ENCODE measurements at regions of chr7 and their contacts with region 1.

Region 1: GRCh38 chr7:140003913-140004382 is 58.8 kb downstream of the PARP12 start:
- DNase-seq: no peak
- ATAC-seq: no peak
- H3K4me3 ChIP-seq: no peak overlapping the region
- H3K27ac ChIP-seq: no peak overlapping the region
- H3K4me1 ChIP-seq: no peaks in the 10 kb centered on the region
- H3K27me3 ChIP-seq: no peaks in the 10 kb centered on the region
- CTCF ChIP-seq: peak in 8 of 9 donors; percentile 11 to 58 (median 45)

Region 2: DNA sequence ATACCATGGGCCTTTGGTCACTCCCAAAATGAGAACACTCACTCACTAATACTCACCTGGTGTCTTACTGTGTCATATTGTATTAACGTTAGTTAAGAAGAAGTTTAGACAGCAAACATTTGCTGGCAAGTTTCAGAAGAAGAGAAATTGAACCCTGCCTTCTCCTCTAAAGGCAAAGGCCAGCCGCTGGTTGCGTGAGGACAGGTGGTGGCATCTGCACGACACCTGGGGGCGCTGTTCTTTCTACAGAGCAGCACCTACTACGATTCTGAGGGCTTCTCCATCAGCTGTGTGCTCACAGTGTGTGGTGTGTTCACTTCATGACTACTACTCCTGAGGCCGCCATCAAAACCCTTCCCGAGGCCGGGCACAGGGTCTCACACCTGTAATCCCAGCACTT is 498.4 kb before region 1 on chr7:
- intact Hi-C with region 1: loop called in 5 of 10 experiments (anchors 2 to 5 kb)
- DNase-seq: no peak
- ATAC-seq: no peak
- H3K4me3 ChIP-seq: no peak overlapping the region
- H3K27ac ChIP-seq: no peak overlapping the region
- H3K4me1 ChIP-seq: peaks cover 0 to under 1% (median 0%) of the 10 kb centered on the region in 9 donors
- H3K27me3 ChIP-seq: peaks cover 0 to 17% (median 0%) of the 10 kb centered on the region in 7 donors
- CTCF ChIP-seq: peak in 2 of 9 donors; percentile 13 to 19

Region 3: DNA sequence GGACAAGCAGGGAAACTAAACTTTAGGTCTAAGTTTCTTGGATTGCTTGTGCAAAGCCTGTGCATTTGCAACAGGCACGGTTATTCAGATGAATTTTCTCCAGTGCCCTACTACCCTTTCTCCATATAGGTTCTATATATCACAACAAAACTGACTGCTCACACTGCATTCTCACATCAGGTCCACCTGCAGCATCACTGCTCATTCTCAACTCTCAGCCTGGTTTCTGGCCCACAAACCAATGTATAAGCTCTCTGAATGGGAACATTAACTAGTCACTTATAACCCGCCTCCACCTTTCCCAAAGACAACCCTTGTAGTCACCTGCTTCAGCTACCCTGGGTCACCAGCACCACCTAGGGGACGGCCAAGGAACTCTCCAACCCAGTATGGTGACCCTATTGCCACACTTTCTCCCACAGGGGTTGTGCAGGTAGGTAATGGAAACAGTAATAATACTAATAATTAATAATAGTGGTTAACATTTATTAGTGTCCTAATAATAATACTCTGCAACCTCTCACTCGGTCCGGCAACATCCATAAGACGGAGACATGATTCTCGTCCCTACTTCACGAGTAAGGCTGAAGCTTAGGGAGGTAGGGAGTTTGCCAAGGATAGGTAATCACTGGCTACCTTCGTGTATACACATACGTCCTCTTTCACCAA is 383.1 kb before region 1 on chr7:
- intact Hi-C with region 1: loop called in 7 of 10 experiments (anchors 2 to 5 kb)
- DNase-seq: no peak
- ATAC-seq: peak in 2 of 8 donors; percentile 41 to 54
- H3K4me3 ChIP-seq: no peak overlapping the region
- H3K27ac ChIP-seq: no peak overlapping the region
- H3K4me1 ChIP-seq: peaks cover 0 to 10% (median 0%) of the 10 kb centered on the region in 9 donors
- H3K27me3 ChIP-seq: no peaks in the 10 kb centered on the region
- CTCF ChIP-seq: peak; percentile 27 to 67 (median 62)

Region 4: DNA sequence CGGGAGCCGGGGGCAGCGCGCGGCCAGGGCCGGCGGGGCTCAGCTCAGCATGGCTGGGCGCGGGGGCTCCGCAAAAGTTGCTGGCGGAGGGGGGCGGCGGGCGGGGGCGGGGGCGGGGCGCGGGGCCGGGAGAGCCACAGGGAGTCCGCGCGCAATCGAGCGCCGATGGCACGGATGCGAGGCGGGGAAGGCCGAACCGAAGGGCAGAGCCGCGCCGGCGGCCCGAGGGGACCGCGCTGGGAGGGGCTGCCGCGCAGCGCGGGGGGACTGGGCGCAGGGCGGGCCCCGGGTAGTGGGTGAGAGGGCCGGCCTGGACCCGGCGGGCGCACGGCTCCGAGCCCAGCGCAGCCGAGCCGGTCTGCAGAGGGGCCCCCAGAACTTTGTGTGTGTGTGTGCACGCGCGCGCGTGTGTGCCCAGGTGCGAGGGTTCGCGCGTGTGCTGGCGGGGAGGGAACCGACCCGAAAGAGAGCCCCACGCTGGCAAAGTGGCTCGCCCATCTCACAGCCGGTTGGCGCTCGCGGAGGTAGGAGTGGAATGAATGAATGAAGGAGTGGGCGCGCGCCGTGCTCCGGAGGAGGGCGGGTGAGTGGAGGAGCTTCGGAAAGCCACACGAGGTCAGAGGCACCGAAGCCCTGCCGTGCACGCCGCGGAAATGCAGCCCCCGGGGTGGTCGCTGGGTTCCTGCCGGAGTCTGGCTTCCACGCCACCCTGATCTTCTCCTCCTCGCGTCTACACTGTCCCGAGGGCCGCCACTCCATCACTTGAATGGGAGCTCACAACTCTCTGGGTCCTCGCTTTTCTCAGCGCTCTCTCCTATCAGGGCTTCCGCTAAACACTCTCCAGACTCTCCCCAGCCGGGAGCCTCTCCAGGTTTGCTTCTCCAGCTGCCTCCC is 225.8 kb before region 1 on chr7 and contains the start of gene HIPK2:
- intact Hi-C with region 1: loop called in 9 of 10 experiments (anchors 5 to 10 kb)
- DNase-seq: peak; percentile 81 to 83
- ATAC-seq: peak; percentile 68 to 91 (median 82)
- H3K4me3 ChIP-seq: peak within 1 kb of the TSS; percentile 63 to 91 (median 83)
- H3K27ac ChIP-seq: peak within 1 kb of the TSS; percentile 88 to 97 (median 94)
- H3K4me1 ChIP-seq: peaks cover 0 to 41% (median 30%) of the 10 kb centered on the region in 9 donors
- H3K27me3 ChIP-seq: no peaks in the 10 kb centered on the region
- CTCF ChIP-seq: no peak
- total RNA-seq, gene HIPK2: 99.4 to 203 (median 136) TPM

Region 5: DNA sequence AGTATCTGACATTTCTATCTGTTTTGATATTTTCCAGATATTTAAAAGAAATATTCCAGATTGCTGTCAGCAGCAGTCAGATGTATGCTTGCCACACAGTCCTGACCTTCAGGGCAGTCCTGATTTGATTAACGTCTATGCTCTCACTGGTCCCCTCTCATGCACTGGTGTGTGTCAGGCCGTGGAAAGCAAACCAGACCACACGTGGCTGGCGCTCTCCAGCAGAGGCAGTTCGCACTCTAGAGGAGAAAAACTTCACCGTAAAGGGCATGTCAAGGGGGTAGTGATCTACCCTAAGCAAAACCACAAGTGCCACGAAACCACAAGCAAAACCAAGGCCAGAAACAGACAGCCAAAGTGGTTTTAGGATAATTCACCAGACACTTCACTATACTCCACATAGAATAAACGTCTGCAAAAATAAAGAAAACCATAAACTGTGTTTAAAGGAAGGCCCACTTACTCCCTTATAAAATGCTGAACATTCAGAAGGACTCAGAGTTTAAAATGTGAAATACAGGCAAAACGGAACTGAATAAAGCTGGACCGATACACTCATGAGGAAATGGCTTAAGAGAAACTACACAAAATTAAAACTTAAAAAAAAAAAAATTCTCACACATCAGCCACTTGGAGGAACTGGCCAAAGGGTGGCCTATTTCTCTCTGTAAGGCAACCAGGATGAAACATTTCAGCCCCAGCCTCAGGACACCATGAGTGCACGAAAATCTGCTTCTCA is 32.4 kb after region 1 on chr7:
- intact Hi-C with region 1: no loop called
- DNase-seq: no peak
- ATAC-seq: peak; percentile 43 to 82 (median 62)
- H3K4me3 ChIP-seq: no peak overlapping the region
- H3K27ac ChIP-seq: no peak overlapping the region
- H3K4me1 ChIP-seq: peaks cover 0 to 28% (median 7%) of the 10 kb centered on the region in 9 donors
- H3K27me3 ChIP-seq: no peaks in the 10 kb centered on the region
- CTCF ChIP-seq: no peak